GM10248 (cell line): ENCODE measurements at regions of chr3 and their contacts with region 1.

Region 1: GRCh38 chr3:158165730-158166129 is 55.8 kb downstream of the RSRC1 start:
- DNase-seq: no peak
- CTCF ChIP-seq: no peak

Region 2: GRCh38 chr3:157906627-157907026 is 259.1 kb before region 1 on chr3:
- CTCF ChIA-PET with region 1: no interaction called
- POLR2A ChIA-PET with region 1: no interaction called
- DNase-seq: no peak
- CTCF ChIP-seq: no peak

Region 3: GRCh38 chr3:158152186-158152585 is 13.5 kb before region 1 on chr3:
- CTCF ChIA-PET with region 1: interaction called, 10 read pairs
- POLR2A ChIA-PET with region 1: no interaction called
- DNase-seq: no peak
- CTCF ChIP-seq: no peak

Region 4: DNA sequence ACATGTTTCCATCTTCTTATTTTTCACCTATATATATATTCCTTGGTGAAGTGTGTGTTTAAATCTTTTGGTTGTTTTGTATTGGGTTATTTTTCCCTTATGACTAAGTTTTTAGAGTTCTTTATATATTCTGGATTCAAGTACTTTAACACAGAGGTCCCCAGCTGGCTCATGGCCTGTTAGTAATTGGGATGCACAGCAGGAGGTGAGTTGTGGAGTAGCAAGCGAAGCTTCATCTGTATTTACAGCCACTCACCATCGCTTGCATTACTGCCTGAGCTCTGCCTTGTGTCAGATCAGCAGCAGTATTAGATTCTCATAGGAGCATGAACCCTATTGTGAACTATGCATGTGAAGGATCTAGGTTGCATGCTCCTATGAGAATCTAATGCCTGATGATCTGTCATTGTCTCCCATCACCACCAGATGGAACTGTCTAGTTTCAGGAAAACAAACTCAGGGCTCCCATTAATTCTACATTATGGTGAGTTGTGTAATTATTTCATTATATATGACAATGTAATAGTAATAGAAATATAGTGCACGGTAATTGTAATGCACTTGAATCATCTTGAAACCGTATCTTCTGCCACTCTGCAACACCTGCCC is 95.7 kb after region 1 on chr3:
- CTCF ChIA-PET with region 1: no interaction called
- POLR2A ChIA-PET with region 1: no interaction called
- DNase-seq: no peak
- CTCF ChIP-seq: no peak